Head of caudate nucleus (tissue), 42 donors: ENCODE measurements at regions of chr17 and their contacts with region 1.

Region 1: GRCh38 chr17:35808962-35809854 is at the start of gene TAF15:
- DNase-seq: peak; percentile 94 to 99 (median 98)

Region 2: GRCh38 chr17:35764123-35764991 is 44.9 kb before region 1 on chr17:
- intact Hi-C with region 1: loop called (anchors 1 kb)
- DNase-seq: peak; percentile 49 to 93 (median 85)

Region 3: DNA sequence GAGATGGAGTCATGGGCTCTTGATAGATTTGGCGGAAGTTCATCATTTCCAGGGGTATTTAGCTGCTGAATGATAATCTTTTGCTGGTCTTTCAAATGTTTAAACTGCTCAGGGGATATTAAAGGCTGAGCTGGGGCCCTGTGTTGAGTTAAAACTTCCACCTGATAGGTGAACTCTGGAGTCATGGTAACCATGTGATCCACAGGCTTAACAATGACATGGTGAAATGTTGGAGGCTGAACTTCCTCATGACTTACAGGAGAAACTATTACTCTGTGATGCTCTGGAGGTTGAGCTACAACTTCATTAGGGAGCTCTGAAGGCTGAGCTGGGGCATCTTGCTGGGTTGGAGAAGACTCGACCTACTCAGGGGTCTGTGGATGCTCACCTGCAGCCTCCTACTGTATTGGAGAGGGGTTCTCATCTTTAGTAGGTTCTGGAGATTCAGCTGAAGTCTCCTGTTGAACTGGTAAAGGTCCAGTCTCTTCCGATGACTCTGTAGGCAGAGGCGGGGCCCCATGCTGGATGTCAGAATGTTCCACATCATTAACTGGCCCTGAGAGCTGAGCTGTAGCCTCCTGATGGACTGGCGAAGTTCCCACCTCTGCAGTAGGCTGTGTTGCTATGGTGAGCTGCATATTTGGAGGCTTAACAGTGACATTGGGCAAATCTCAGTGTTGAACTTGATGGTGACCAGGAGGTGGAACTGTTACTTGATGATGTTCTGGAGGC is 97.1 kb after region 1 on chr17:
- intact Hi-C with region 1: no loop called
- DNase-seq: no peak